ENCODE measurements at regions of chr19 and their contacts with region 1.

Region 1: GRCh38 chr19:37719111-37719926 is at the start of gene ZNF607:
- DNase-seq: peak; percentile 96
- H3K4me3 Mint-ChIP-seq: peak within 1 kb of the TSS; percentile 90
- H3K27ac Mint-ChIP-seq: peak within 1 kb of the TSS; percentile 72
- H3K4me1 Mint-ChIP-seq: peaks cover 10% of the 10 kb centered on the region
- H3K27me3 Mint-ChIP-seq: no peaks in the 10 kb centered on the region
- CTCF ChIP-seq: no peak
- total RNA-seq, gene ZNF607: 13.5 and 13.7 TPM in 2 replicates

Region 2: DNA sequence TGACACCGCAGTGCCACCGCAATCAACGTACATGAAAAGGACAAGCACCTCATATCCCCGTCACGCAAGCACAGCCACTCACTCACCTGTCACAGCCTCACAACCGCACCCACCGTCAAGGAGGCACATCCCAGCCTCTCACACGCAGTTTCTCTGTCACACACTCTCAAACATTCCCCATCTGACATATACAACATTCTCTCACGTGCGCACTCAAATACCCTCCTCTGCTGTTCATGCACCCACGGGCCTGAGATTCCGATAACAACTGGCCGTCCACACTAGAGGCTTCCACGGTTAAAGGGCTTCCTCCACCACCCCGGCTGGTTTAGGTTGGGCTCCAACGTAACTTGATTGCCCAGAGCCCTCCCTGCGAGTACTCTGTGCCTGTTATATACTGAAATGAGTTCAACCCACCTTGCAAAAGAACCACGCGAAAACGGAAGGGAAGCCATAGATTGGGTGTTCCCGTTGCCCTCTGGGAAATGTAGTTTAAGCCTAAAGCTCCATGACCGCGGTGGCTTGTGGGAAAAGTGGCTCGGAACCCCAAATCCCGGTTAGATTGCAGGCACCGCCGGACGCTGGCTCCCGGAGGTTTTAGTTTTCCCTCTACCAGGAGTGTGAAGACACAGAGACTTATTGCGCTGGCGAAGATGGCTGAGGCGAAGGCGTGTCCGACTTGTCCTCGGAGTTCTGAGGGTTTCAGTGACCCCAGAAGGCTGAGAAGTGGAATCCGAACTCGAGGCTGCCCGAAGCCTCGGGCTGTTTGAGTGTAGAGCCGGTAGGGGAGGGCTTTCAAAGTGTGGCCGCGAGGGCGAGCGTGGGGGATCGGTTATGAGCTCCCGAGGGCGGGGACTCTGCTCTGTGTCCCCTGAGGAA is 60.0 kb after region 1 on chr19 and contains the start of gene ZNF573:
- CTCF ChIA-PET with region 1: interaction called, 3 read pairs
- intact Hi-C with region 1: loop called (anchors 2 kb)
- DNase-seq: peak; percentile 86
- H3K4me3 Mint-ChIP-seq: peak within 1 kb of the TSS; percentile 96
- H3K27ac Mint-ChIP-seq: peak within 1 kb of the TSS; percentile 83
- H3K4me1 Mint-ChIP-seq: peaks cover 8% of the 10 kb centered on the region
- H3K27me3 Mint-ChIP-seq: no peaks in the 10 kb centered on the region
- CTCF ChIP-seq: no peak
- total RNA-seq, gene ZNF573: 10.1 and 16.8 TPM in 2 replicates

Measured in Calu3 (cell line).